Calu3 (cell line): ENCODE measurements at regions of chr18 and their contacts with region 1.

Region 1: GRCh38 chr18:51668101-51668500 is 470.6 kb upstream of the MEX3C start:
- DNase-seq: peak; percentile 68
- H3K4me3 Mint-ChIP-seq: no peak overlapping the region
- H3K27ac Mint-ChIP-seq: no peak overlapping the region
- H3K4me1 Mint-ChIP-seq: no peaks in the 10 kb centered on the region
- H3K27me3 Mint-ChIP-seq: peaks cover 24% of the 10 kb centered on the region
- CTCF ChIP-seq: peak; percentile 87

Region 2: DNA sequence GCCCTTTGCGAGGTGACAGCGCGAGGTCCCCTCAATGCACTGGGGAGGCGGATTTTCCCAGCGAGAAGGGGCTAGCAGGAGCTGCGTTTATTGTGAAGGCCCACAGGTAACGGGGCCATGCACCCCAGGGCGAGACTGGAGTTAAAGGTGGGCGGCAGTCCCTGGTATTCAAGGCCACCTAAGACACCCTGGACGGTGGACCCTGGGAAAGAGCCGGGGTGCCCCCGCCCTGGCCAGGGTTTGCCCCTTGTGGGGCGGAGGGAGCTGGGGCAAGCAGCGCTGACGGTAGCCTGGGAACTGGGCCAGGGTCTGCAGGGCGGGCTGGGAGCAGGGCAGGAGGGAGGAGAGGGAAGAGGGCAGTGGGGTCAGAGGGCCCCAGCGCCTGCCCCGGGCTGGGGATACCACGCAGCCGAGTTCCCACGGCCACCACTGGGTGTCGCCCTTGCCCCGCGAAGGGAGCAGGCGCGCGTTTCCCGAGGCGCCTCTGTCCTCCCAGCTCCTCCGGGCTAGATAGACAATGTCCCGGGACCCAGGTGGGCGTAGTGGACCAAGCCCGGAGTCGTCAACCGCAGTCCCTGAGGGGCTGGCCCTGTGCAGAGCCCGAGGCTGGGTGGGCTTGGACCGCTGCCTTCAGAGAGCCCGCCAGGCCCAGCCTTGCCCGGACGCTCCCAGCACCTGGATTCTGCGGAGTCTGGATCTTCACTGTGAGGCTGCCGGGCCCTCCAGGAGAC is 557.9 kb before region 1 on chr18:
- CTCF ChIA-PET with region 1: no interaction called
- intact Hi-C with region 1: loop called (anchors 5 kb)
- DNase-seq: peak; percentile 85
- H3K4me3 Mint-ChIP-seq: no peak overlapping the region
- H3K27ac Mint-ChIP-seq: no peak overlapping the region
- H3K4me1 Mint-ChIP-seq: peaks cover 16% of the 10 kb centered on the region
- H3K27me3 Mint-ChIP-seq: no peaks in the 10 kb centered on the region
- CTCF ChIP-seq: peak; percentile 98

Region 3: DNA sequence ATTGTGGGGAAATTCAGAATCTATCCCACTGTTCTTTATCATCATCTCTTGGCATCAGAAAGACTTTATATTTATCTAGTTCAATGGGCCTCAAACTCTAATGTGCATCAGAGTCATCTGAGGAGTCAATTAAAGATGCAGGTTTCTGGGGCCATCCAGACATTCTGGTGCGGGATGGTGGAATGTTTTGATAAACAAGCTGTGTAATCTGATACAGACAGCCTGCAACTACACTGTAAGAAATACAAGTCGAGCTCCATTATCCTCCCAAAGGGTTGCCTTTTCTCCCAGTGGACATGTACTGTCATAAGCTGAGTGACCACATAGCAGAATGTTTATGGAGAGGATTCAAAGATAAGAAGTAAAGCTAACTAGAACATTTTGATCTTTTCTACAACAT is 156.6 kb after region 1 on chr18:
- CTCF ChIA-PET with region 1: interaction called, 13 read pairs
- intact Hi-C with region 1: no loop called
- DNase-seq: no peak
- H3K4me3 Mint-ChIP-seq: no peak overlapping the region
- H3K27ac Mint-ChIP-seq: no peak overlapping the region
- H3K4me1 Mint-ChIP-seq: no peaks in the 10 kb centered on the region
- H3K27me3 Mint-ChIP-seq: no peaks in the 10 kb centered on the region
- CTCF ChIP-seq: no peak

Region 4: DNA sequence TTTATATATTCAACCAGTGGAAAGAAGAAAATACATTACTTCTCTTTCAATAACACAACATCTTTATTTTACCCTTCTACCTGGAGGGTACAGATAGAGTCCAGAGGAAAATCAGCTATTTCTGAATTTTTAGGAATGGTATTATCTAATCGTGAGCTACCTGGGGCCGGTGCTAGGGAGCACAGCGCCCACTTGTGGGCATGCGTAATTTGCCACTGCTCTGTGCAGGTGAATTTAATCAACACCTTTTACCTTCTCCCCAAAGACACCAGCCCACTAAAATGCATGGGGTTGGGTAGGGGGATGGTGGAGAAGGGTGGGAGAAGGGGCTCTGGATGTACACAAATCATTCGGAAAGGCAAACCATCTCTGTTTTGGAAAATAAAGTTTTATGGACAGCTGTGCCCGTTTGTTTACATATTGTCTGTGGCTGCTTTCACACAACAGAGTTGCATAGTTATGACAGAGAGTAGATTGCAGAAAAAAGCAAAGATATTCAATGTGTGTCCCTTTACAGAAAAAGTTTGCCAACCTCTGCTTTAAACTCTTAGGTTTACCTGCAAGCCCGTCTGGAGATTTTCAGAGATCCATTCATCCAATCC is 620.4 kb after region 1 on chr18:
- CTCF ChIA-PET with region 1: interaction called, 7 read pairs
- intact Hi-C with region 1: loop called (anchors 1 kb)
- DNase-seq: peak; percentile 62
- H3K4me3 Mint-ChIP-seq: no peak overlapping the region
- H3K27ac Mint-ChIP-seq: no peak overlapping the region
- H3K4me1 Mint-ChIP-seq: no peaks in the 10 kb centered on the region
- H3K27me3 Mint-ChIP-seq: peaks cover 9% of the 10 kb centered on the region
- CTCF ChIP-seq: peak; percentile 77

Region 5: DNA sequence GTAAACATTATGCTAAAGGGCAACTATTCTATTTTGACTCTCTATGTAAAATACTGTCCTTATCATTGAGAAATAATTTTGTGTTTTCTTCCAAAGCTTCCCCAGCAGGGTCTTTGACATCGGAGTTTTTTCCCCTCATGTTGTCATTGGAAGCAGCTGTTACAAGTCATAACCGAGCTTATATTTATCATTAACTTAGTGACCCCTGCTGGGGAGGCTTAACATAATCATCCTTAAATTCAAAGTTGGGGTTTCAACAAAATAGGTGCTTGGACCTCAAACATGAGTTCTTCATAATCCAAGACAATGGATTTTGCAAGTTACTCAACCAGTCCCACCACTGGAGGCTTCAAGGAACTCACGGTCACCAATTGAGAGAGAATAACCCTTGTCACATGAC is 1002.8 kb after region 1 on chr18:
- CTCF ChIA-PET with region 1: interaction called, 16 read pairs
- intact Hi-C with region 1: loop called (anchors 1 kb)
- DNase-seq: peak; percentile 2
- H3K4me3 Mint-ChIP-seq: no peak overlapping the region
- H3K27ac Mint-ChIP-seq: no peak overlapping the region
- H3K4me1 Mint-ChIP-seq: no peaks in the 10 kb centered on the region
- H3K27me3 Mint-ChIP-seq: peaks cover 29% of the 10 kb centered on the region
- CTCF ChIP-seq: no peak

Region 6: GRCh38 chr18:53380063-53380639 is 1712.0 kb after region 1 on chr18:
- CTCF ChIA-PET with region 1: no interaction called
- intact Hi-C with region 1: loop called (anchors 5 kb)
- DNase-seq: peak; percentile 3
- H3K4me3 Mint-ChIP-seq: no peak overlapping the region
- H3K27ac Mint-ChIP-seq: no peak overlapping the region
- H3K4me1 Mint-ChIP-seq: no peaks in the 10 kb centered on the region
- H3K27me3 Mint-ChIP-seq: no peaks in the 10 kb centered on the region
- CTCF ChIP-seq: peak; percentile 15